Body of pancreas (tissue), 4 donors: ENCODE measurements at regions of chr1 and their contacts with region 1.

Region 1: DNA sequence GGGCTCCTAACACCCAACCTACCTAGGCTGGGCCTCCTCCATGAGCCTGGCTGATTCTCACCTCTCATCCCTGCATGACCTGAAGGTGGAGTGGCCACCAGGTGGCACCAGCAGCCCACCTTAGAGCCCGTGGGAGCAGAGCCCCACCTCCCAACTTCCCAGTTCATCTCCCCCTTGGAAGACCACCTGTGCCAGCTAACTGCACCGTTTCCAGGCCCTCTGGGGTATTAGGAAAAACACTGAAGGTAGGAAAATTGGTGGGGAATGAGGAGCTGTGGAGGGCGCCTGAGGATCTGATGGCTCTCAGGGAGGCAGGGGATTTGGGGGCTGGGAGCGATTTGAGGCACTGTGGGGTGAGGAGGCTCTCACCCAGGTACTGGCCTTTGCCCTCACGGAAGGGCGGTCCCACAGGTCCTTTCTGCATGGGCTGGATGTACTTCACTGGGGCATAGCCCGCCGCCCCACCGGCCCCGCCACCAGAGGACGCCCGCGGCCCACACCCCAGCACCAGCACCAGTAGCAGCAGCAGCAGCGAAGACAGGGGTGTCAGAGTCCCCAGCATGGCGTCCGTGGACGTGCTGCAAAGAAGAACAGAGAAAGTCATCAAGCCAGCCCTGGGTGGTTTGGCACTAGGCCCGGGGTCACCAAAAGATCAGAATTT is 11.1 kb downstream of the ADPRS start:
- DNase-seq: peak; percentile 76 to 86 (median 82)
- ATAC-seq: peak; percentile 86
- H3K4me3 ChIP-seq: no peak overlapping the region
- H3K27ac ChIP-seq: no peak overlapping the region
- H3K4me1 ChIP-seq: peaks cover 6% of the 10 kb centered on the region
- H3K27me3 ChIP-seq: no peaks in the 10 kb centered on the region
- CTCF ChIP-seq: peak; percentile 73 to 89 (median 87)
- POLR2A ChIP-seq: no peak

Region 2: GRCh38 chr1:35691571-35692220 is 408.1 kb before region 1 on chr1:
- intact Hi-C with region 1: no loop called
- DNase-seq: no peak
- ATAC-seq: no peak
- H3K4me3 ChIP-seq: no peak overlapping the region
- H3K27ac ChIP-seq: no peak overlapping the region
- H3K4me1 ChIP-seq: no peaks in the 10 kb centered on the region
- H3K27me3 ChIP-seq: no peaks in the 10 kb centered on the region
- CTCF ChIP-seq: no peak
- POLR2A ChIP-seq: no peak

Region 3: GRCh38 chr1:36149237-36149972 is 49.6 kb after region 1 on chr1 and contains the start of gene TRAPPC3:
- intact Hi-C with region 1: loop called (anchors 10 kb)
- DNase-seq: peak; percentile 100
- ATAC-seq: peak; percentile 92
- H3K4me3 ChIP-seq: peak within 1 kb of the TSS; percentile 40 to 47
- H3K27ac ChIP-seq: peak within 1 kb of the TSS; percentile 90 to 96 (median 94)
- H3K4me1 ChIP-seq: peaks cover 40% of the 10 kb centered on the region
- H3K27me3 ChIP-seq: no peaks in the 10 kb centered on the region
- CTCF ChIP-seq: peak; percentile 90 to 100 (median 99)
- POLR2A ChIP-seq: peak; percentile 49 to 89 (median 77)
- total RNA-seq, gene TRAPPC3: 45.7 to 71.5 TPM

Region 4: DNA sequence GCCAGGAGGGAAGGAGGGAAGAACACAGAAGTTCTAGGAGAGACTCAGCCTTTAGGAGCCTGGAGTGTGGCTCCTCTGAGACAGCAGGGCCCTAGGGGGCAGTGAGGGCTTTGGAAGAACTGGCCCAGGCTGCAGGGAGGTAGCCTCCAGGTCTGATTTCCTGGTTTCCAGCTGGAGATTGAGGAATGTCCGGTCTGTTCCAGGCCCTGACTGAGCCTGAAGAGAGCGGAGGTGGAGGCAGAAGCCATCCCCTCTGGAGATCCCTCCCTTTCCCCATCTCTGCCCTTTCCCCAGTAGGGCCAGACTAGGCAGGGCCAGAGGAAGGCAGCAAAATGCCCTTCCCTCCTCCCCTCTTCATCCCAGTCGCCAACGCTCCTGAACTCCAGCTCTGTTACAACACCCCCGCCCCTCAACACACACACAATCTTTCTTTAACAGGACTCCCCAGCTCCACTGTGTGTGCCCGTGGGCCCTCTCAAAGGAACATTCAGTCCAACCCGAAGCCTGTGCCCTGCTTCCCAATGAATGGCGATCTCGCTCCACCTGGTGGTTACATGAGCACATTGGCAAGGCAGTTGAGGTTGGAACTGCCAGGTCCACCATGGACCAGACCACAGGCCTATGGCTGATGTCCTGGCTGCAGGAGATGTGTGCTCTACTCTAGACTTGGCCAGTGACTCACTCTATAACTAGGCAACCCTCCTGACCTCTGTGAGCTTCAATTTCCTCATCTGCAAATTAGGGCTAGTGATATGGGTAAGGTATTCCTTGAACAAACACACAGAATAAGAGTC is 88.2 kb after region 1 on chr1:
- intact Hi-C with region 1: loop called (anchors 5 kb)
- DNase-seq: peak; percentile 87 to 91 (median 89)
- ATAC-seq: peak; percentile 98
- H3K4me3 ChIP-seq: no peak overlapping the region
- H3K27ac ChIP-seq: peak overlapping the region; percentile 33 to 65 (median 58)
- H3K4me1 ChIP-seq: peaks cover 9% of the 10 kb centered on the region
- H3K27me3 ChIP-seq: no peaks in the 10 kb centered on the region
- CTCF ChIP-seq: peak; percentile 73 to 97 (median 96)
- POLR2A ChIP-seq: peak in 1 of 3 donors; percentile 17

Region 5: GRCh38 chr1:36285448-36286101 is 185.8 kb after region 1 on chr1:
- intact Hi-C with region 1: loop called (anchors 5 kb)
- DNase-seq: peak; percentile 75 to 90 (median 79)
- ATAC-seq: peak; percentile 91
- H3K4me3 ChIP-seq: no peak overlapping the region
- H3K27ac ChIP-seq: peak overlapping the region in 1 of 4 donors; percentile 24
- H3K4me1 ChIP-seq: peaks cover 4% of the 10 kb centered on the region
- H3K27me3 ChIP-seq: no peaks in the 10 kb centered on the region
- CTCF ChIP-seq: peak; percentile 44 to 85 (median 76)
- POLR2A ChIP-seq: no peak

Region 6: GRCh38 chr1:36411674-36412520 is 312.1 kb after region 1 on chr1:
- intact Hi-C with region 1: loop called (anchors 10 kb)
- DNase-seq: peak in 1 of 4 donors; percentile 23
- ATAC-seq: peak; percentile 60
- H3K4me3 ChIP-seq: no peak overlapping the region
- H3K27ac ChIP-seq: no peak overlapping the region
- H3K4me1 ChIP-seq: no peaks in the 10 kb centered on the region
- H3K27me3 ChIP-seq: no peaks in the 10 kb centered on the region
- CTCF ChIP-seq: no peak
- POLR2A ChIP-seq: no peak